WTC11 (cell line): ENCODE measurements at regions of chr19 and their contacts with region 1.

Region 1: GRCh38 chr19:58558623-58559274 is 338 bp upstream of the UBE2M start:
- DNase-seq: peak; percentile 100
- ATAC-seq: peak; percentile 59
- H3K4me3 Mint-ChIP-seq: peak overlapping the region; percentile 97
- H3K27ac Mint-ChIP-seq: peak overlapping the region; percentile 100
- H3K4me1 Mint-ChIP-seq: peaks cover 41% of the 10 kb centered on the region
- H3K27me3 Mint-ChIP-seq: peaks cover 43% of the 10 kb centered on the region
- CTCF ChIP-seq: no peak

Region 2: GRCh38 chr19:58543826-58544590 is 14.7 kb before region 1 on chr19 and contains the start of gene TRIM28:
- CTCF ChIA-PET with region 1: interaction called, 6 read pairs
- POLR2A ChIA-PET with region 1: interaction called, 30 read pairs
- DNase-seq: peak; percentile 98
- ATAC-seq: peak; percentile 95
- H3K4me3 Mint-ChIP-seq: peak within 1 kb of the TSS; percentile 97
- H3K27ac Mint-ChIP-seq: peak within 1 kb of the TSS; percentile 99
- H3K4me1 Mint-ChIP-seq: peaks cover 17% of the 10 kb centered on the region
- H3K27me3 Mint-ChIP-seq: peaks cover 45% of the 10 kb centered on the region
- CTCF ChIP-seq: no peak
- total RNA-seq, gene TRIM28: 1,095 to 1,221 TPM (median 1,108 TPM) in 3 replicates

Region 3: GRCh38 chr19:58581227-58582151 is 22.7 kb after region 1 on chr19:
- CTCF ChIA-PET with region 1: interaction called, 11 read pairs
- POLR2A ChIA-PET with region 1: interaction called, 8 read pairs
- DNase-seq: peak; percentile 97
- ATAC-seq: peak; percentile 97
- H3K4me3 Mint-ChIP-seq: no peak overlapping the region
- H3K27ac Mint-ChIP-seq: peak overlapping the region; percentile 91
- H3K4me1 Mint-ChIP-seq: peaks cover 7% of the 10 kb centered on the region
- H3K27me3 Mint-ChIP-seq: no peaks in the 10 kb centered on the region
- CTCF ChIP-seq: peak; percentile 90